ENCODE measurements at regions of chr2 and their contacts with region 1.

Region 1: GRCh38 chr2:118003396-118003824 is 10.5 kb downstream of the CCDC93 start:
- DNase-seq: peak; percentile 57 to 78 (median 66)
- ATAC-seq: peak; percentile 99
- H3K4me3 ChIP-seq: no peak overlapping the region
- H3K27ac ChIP-seq: no peak overlapping the region
- H3K4me1 ChIP-seq: no peaks in the 10 kb centered on the region
- H3K27me3 ChIP-seq: no peaks in the 10 kb centered on the region
- CTCF ChIP-seq: peak; percentile 66 to 86 (median 81)
- EP300 ChIP-seq: no peak
- POLR2A ChIP-seq: no peak
- RAD21 ChIP-seq: peak; percentile 65 to 77

Region 2: GRCh38 chr2:117470311-117471095 is 532.9 kb before region 1 on chr2:
- CTCF ChIA-PET with region 1: no interaction called
- POLR2A ChIA-PET with region 1: no interaction called
- in situ Hi-C with region 1: no loop called
- intact Hi-C with region 1: loop called (anchors 5 kb)
- DNase-seq: peak; percentile 22 to 48 (median 29)
- ATAC-seq: peak; percentile 72
- H3K4me3 ChIP-seq: no peak overlapping the region
- H3K27ac ChIP-seq: no peak overlapping the region
- H3K4me1 ChIP-seq: no peaks in the 10 kb centered on the region
- H3K27me3 ChIP-seq: no peaks in the 10 kb centered on the region
- CTCF ChIP-seq: peak; percentile 47 to 59 (median 52)
- EP300 ChIP-seq: no peak
- POLR2A ChIP-seq: no peak
- RAD21 ChIP-seq: peak in 1 of 2 experiments; percentile 58; a peak in 2 of 4 replicates

Region 3: GRCh38 chr2:117723888-117724434 is 279.4 kb before region 1 on chr2:
- CTCF ChIA-PET with region 1: no interaction called
- POLR2A ChIA-PET with region 1: no interaction called
- in situ Hi-C with region 1: no loop called
- intact Hi-C with region 1: loop called (anchors 5 kb)
- DNase-seq: no peak
- ATAC-seq: no peak
- H3K4me3 ChIP-seq: no peak overlapping the region
- H3K27ac ChIP-seq: no peak overlapping the region
- H3K4me1 ChIP-seq: no peaks in the 10 kb centered on the region
- H3K27me3 ChIP-seq: no peaks in the 10 kb centered on the region
- CTCF ChIP-seq: no peak
- EP300 ChIP-seq: no peak
- POLR2A ChIP-seq: no peak
- RAD21 ChIP-seq: no peak

Region 4: GRCh38 chr2:117814417-117815264 is 188.8 kb before region 1 on chr2 and contains the start of gene DDX18:
- CTCF ChIA-PET with region 1: interaction called, 5 read pairs
- POLR2A ChIA-PET with region 1: no interaction called
- in situ Hi-C with region 1: no loop called
- intact Hi-C with region 1: loop called (anchors 2 kb)
- DNase-seq: peak; percentile 81 to 99 (median 84)
- ATAC-seq: peak; percentile 96
- H3K4me3 ChIP-seq: peak within 1 kb of the TSS; percentile 56
- H3K27ac ChIP-seq: peak within 1 kb of the TSS; percentile 81
- H3K4me1 ChIP-seq: peaks cover 0 to 2% of the 10 kb centered on the region in 2 experiments; a peak in 2 of 5 replicates
- H3K27me3 ChIP-seq: no peaks in the 10 kb centered on the region
- CTCF ChIP-seq: peak; percentile 99 to 100 (median 100)
- EP300 ChIP-seq: peak; percentile 57
- POLR2A ChIP-seq: peak; percentile 92
- RAD21 ChIP-seq: peak; percentile 66 to 69
- polyA plus RNA-seq, gene DDX18: 90.5 to 124 TPM

Region 5: GRCh38 chr2:117820444-117820843 is 183.0 kb before region 1 on chr2:
- CTCF ChIA-PET with region 1: no interaction called
- POLR2A ChIA-PET with region 1: no interaction called
- in situ Hi-C with region 1: loop called (anchors 10 kb)
- intact Hi-C with region 1: loop called (anchors 2 kb)
- DNase-seq: no peak
- ATAC-seq: no peak
- H3K4me3 ChIP-seq: no peak overlapping the region
- H3K27ac ChIP-seq: no peak overlapping the region
- H3K4me1 ChIP-seq: no peaks in the 10 kb centered on the region; a peak in 1 of 5 replicates
- H3K27me3 ChIP-seq: no peaks in the 10 kb centered on the region
- CTCF ChIP-seq: no peak
- EP300 ChIP-seq: no peak
- POLR2A ChIP-seq: no peak
- RAD21 ChIP-seq: no peak

Region 6: DNA sequence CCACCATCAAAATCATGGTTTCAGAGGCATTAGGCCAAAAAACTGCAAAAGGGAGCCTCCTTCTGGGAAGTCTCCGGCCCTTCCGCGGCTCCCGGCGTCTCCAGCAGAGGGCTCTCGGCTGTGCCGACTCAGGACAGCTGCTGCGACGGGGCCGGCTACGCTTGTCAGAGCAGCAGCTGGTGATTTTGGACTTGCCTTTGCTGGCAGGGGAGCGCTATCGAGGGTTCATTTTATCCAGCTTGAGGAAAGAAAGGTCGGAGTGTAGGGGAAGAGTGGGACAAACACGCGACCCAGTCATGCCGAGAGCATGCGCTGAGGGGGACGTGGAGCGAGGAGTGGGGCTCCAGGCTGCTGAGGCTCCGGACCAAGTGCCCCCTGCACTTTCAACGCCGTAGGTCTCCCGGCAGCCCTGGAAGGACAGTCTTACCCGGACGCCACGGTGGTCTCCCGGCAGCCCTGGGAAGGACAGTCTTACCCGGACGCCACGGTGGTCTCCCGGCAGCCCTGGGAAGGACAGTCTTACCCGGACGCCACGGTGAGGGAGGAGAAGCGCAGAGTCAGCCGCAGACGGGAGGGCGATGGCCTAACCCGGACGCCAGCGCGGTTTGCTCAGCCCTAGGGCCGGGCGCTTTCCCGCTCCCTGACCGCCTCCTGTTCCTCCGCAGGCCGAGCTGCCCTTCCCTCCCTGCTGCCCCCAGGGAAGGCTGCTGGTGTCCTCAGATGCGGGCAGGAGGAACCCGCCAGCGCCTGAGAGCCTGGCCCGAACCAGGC is 167.2 kb before region 1 on chr2:
- CTCF ChIA-PET with region 1: no interaction called
- POLR2A ChIA-PET with region 1: interaction called, 3 read pairs
- in situ Hi-C with region 1: no loop called
- intact Hi-C with region 1: loop called (anchors 5 kb)
- DNase-seq: peak; percentile 39 to 54 (median 48)
- ATAC-seq: peak; percentile 90
- H3K4me3 ChIP-seq: no peak overlapping the region
- H3K27ac ChIP-seq: no peak overlapping the region
- H3K4me1 ChIP-seq: peaks cover 0 to 4% of the 10 kb centered on the region in 2 experiments; a peak in 2 of 5 replicates
- H3K27me3 ChIP-seq: no peaks in the 10 kb centered on the region
- CTCF ChIP-seq: peak; percentile 62 to 88 (median 65)
- EP300 ChIP-seq: no peak
- POLR2A ChIP-seq: peak; percentile 45; the same call in 1 of the 2 replicates
- RAD21 ChIP-seq: peak in 1 of 2 experiments; percentile 25; a peak in 1 of 4 replicates

Measured in K562 (cell line).